ENCODE measurements at regions of chr2 and their contacts with region 1.

Region 1: DNA sequence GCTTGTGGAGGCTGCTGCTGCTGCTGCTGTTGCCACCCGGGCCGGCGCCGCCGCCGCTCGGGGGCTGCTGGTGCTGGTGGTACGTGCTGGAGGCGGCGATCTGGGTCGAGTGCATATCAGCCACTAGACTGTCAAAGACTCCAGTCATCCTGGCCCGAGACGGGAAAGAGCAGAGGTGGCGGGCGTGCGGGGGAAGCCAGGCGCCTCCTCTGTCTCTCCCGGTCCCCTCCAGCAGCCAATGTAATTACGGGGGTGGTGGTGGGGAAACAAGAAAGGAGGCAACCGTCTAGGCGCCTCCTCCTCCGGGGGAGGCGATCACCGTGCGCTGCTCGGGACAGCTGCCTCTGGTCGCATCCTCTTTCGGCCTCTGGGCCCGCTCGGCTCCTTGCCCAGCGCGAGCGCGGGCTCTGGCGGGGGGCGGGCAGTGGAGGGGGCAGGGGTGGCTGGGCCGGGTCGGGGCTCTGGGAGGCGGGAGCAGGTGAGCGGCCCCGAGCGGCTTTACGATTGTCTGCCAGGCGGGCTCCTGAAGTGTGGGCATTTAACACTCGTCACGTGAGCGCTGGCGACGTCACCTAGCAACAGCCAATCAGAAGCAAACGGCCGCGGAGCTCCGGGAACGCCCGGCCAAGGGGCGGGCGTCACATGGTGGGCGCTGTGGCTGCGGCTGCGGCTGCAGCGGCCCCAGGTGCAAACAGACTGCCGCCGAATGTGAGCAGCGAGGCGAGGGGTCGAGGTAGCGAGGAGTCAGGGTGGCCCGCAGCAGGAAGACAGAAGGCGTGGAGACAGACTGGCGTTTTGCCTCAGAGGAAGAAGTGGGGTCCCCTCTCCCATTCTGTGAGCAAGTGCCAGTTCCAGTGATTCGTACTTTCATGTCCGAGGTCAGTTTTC is at the start of gene DLX2:
- DNase-seq: peak; percentile 93
- ATAC-seq: peak; percentile 67
- H3K4me3 ChIP-seq: peak within 1 kb of the TSS; percentile 61 to 75 (median 65)
- H3K27ac ChIP-seq: no peak within 1 kb of the TSS
- H3K4me1 ChIP-seq: peaks cover 62% of the 10 kb centered on the region
- H3K27me3 ChIP-seq: peaks cover 4 to 37% of the 10 kb centered on the region in 2 experiments
- CTCF ChIP-seq: peak; percentile 59
- EP300 ChIP-seq: peak in 1 of 2 experiments; percentile 25; a peak in 1 of 4 replicates
- POLR2A ChIP-seq: peak in 1 of 2 experiments; percentile 72; a peak in 2 of 4 replicates
- RAD21 ChIP-seq: peak; percentile 62
- total RNA-seq, gene DLX2: 0.15 TPM in 1 of 2 replicates, not detected in the other

Region 2: DNA sequence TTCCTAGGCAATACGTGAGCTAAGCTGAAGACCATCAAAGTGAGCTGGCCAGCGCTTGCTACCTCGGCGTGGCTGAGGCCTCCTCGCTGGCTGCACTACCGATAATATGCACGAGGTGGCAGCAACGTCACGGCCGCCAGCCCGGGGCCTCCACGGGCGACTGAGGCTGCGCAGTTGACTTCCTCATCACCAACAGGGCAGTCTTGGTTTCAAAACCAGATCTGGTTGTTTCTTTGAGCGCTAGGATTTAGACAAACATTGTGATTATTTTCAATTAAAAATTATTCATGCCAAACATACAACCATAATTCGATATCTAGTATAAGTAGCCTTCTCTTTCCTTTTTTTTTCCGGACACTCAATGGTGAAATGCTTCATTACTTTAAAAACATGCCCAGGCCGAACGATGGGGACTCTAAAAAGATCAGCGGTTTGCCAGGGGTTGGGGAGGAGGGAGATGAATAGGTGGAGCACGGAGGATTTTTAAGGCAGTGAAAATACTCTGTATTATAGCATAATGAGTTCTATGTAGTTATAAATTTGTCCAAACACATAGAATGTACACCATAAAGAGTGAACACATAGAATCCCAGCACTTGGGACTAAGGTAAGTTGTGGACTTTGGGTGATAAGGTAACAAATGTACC is 528.4 kb before region 1 on chr2:
- CTCF ChIA-PET with region 1: interaction called, 3 read pairs
- POLR2A ChIA-PET with region 1: no interaction called
- in situ Hi-C with region 1: loop called (anchors 5 kb)
- intact Hi-C with region 1: loop called (anchors 2 kb)
- DNase-seq: peak; percentile 66
- ATAC-seq: peak; percentile 99
- H3K4me3 ChIP-seq: peak overlapping the region; percentile 28 to 60 (median 60); a peak in 5 of 6 replicates
- H3K27ac ChIP-seq: no peak overlapping the region
- H3K4me1 ChIP-seq: peaks cover 7% of the 10 kb centered on the region; the same call in 1 of the 2 replicates
- H3K27me3 ChIP-seq: peaks cover 0 to 36% of the 10 kb centered on the region in 2 experiments; a peak in 2 of 5 replicates
- CTCF ChIP-seq: peak; percentile 97
- EP300 ChIP-seq: no peak
- POLR2A ChIP-seq: no peak
- RAD21 ChIP-seq: peak; percentile 95

Region 3: DNA sequence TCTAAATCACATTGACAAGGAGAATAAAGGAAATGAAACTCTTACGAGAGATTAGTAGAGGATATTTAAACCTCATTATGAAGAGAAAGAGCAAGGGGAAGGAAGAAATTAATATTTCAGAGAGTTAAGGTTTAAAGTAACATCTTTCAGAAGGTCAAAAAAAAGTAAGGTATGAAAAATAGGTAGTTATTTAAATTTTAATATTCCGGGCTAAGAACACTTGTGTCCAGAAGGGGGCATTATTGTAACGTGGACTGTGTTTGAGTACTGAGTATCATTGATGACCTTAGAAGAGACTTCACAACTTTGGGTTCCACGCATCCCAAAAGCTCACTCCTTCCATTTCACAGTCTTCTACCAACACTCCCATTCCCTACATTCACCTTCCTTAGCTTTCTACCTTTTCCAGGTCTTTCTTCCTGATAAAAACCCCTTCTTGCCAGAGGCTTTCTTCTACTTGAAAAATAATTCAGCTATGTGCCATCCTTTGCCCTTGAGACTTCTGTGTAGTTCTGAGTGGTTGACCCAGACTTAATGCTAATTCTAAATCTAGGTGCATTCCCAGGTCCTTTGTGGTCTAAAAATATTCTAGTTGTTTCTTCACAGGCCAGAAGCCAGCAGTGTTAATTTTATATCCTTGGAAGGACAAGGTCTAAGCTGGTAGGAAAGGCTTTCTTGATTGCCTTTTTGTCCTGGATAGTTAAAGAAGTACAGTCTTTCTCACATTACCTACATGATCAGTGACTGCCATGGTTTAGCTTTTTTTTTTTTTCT is 398.9 kb before region 1 on chr2:
- CTCF ChIA-PET with region 1: interaction called, 52 read pairs
- POLR2A ChIA-PET with region 1: interaction called, 12 read pairs
- in situ Hi-C with region 1: loop called (anchors 5 kb)
- intact Hi-C with region 1: loop called (anchors 1 kb)
- DNase-seq: peak; percentile 53
- ATAC-seq: peak; percentile 69
- H3K4me3 ChIP-seq: no peak overlapping the region
- H3K27ac ChIP-seq: no peak overlapping the region
- H3K4me1 ChIP-seq: peaks cover 8% of the 10 kb centered on the region; the same call in 1 of the 2 replicates
- H3K27me3 ChIP-seq: no peaks in the 10 kb centered on the region
- CTCF ChIP-seq: peak; percentile 73
- EP300 ChIP-seq: no peak
- POLR2A ChIP-seq: no peak
- RAD21 ChIP-seq: peak; percentile 73

Region 4: DNA sequence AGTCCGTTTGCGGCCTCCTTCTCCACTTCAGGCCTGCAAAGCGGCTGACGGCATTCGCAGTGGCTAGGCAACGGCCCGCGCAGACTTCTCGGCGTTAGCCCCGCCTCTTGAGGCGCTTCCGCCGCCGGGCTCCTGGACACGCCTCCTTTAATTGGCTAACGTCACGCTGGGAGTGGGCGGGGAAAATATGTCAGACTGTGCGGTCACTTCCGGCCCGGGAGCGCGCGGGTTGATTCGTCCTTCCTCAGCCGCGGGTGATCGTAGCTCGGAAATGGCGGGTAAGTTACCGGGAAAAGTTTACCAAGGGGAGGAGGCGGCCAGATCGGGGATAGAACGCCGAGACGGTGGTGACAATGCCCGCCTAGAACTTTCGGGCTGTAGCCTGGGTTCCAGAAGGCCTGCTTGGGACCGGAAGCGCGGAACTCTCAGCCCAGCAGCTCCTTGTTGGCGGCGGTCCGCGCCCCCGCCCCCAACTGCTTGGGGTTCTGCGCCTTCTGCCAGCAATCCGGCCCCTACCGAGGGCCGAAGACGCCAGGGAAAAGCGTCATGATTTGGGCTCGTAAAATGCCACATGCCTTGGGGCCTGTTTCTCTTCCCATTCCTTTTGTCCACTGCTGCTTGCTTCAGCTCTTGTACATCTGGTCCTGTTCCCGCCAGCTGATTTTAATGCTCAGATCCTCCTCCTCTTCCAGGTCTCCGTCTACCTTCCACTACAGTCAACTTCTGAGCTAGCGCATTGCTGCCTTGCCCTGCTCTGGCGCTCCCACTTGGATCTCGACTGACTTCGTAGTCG is 180.2 kb before region 1 on chr2 and contains the start of gene HAT1:
- CTCF ChIA-PET with region 1: no interaction called
- POLR2A ChIA-PET with region 1: interaction called, 10 read pairs
- in situ Hi-C with region 1: no loop called
- intact Hi-C with region 1: no loop called
- DNase-seq: peak; percentile 94
- ATAC-seq: peak; percentile 94
- H3K4me3 ChIP-seq: peak within 1 kb of the TSS; percentile 87 to 95 (median 87)
- H3K27ac ChIP-seq: peak within 1 kb of the TSS; percentile 83
- H3K4me1 ChIP-seq: peaks cover 32% of the 10 kb centered on the region
- H3K27me3 ChIP-seq: peaks cover 0 to 3% of the 10 kb centered on the region in 2 experiments; a peak in 1 of 5 replicates
- CTCF ChIP-seq: no peak
- EP300 ChIP-seq: peak; percentile 3 to 7; a peak in 2 of 4 replicates
- POLR2A ChIP-seq: peak in 1 of 2 experiments; percentile 81; a peak in 3 of 4 replicates
- RAD21 ChIP-seq: 0 out of 2 replicates have a peak, but pooled peaks have one; percentile 40
- total RNA-seq, gene HAT1: 119 and 195 TPM in 2 replicates

Region 5: DNA sequence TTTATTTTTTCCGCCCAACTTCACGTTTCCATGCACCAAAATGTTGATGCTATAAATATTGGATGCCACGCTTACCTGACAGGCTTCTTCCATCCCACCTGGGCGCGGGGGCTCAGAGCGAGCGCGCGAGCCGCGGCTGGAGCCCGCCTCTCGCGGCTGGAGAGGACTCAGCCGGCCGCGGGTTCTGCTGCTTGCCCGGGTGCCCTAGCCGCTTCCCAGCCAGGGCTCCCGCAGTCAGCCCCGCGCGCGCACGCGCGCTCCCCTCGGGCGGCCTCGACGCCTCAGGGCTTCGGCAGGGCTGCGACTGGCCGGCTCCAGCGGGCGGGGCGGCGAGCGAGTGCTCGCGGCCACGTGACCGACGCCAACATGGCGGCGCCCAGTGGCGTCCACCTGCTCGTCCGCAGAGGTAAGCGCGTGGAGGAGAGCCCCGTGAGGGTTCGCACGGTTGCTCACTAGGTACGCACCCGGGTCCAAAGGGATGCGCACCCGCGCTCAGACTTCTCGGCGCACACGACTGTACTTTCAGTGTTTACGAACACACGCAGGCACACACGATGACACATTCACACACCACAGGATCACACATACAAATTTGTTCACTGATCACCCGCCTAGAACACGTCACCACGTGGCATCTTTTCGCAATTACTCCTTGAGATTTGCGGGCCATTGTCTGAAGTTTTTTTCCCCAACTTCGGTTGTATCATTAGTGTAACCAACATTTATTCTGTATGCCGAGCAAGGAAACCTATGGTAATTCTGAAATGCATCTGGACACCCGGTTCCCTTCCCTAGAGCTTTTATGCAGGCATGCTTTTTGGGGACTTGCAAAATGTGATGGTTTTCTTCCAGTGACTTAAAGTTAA is 102.8 kb before region 1 on chr2 and contains the start of gene METAP1D:
- CTCF ChIA-PET with region 1: interaction called, 3 read pairs
- POLR2A ChIA-PET with region 1: interaction called, 6 read pairs
- in situ Hi-C with region 1: loop called (anchors 5 kb)
- intact Hi-C with region 1: loop called (anchors 1 kb)
- DNase-seq: peak; percentile 91
- ATAC-seq: peak; percentile 100
- H3K4me3 ChIP-seq: peak within 1 kb of the TSS; percentile 59 to 80 (median 66)
- H3K27ac ChIP-seq: peak within 1 kb of the TSS; percentile 82
- H3K4me1 ChIP-seq: peaks cover 21% of the 10 kb centered on the region
- H3K27me3 ChIP-seq: no peaks in the 10 kb centered on the region
- CTCF ChIP-seq: peak; percentile 36; the same call in 1 of the 2 replicates
- EP300 ChIP-seq: peak in 1 of 2 experiments; percentile 50; a peak in 1 of 4 replicates
- POLR2A ChIP-seq: peak; percentile 98
- RAD21 ChIP-seq: peak; percentile 89
- total RNA-seq, gene METAP1D: 14.0 and 14.7 TPM in 2 replicates

Region 6: GRCh38 chr2:172084734-172085459 is 17.7 kb before region 1 on chr2:
- CTCF ChIA-PET with region 1: interaction called, 3 read pairs
- POLR2A ChIA-PET with region 1: interaction called, 42 read pairs
- in situ Hi-C with region 1: no loop called
- intact Hi-C with region 1: loop called (anchors 2 kb)
- DNase-seq: peak; percentile 92
- ATAC-seq: peak; percentile 87
- H3K4me3 ChIP-seq: peak overlapping the region; percentile 60 to 82 (median 64)
- H3K27ac ChIP-seq: no peak overlapping the region
- H3K4me1 ChIP-seq: peaks cover 84% of the 10 kb centered on the region
- H3K27me3 ChIP-seq: peaks cover 13 to 83% of the 10 kb centered on the region in 2 experiments; a peak in 4 of 5 replicates
- CTCF ChIP-seq: peak; percentile 35
- EP300 ChIP-seq: 0 out of 4 replicates have a peak, but pooled peaks of 1 of the 2 experiments have one; percentile 27
- POLR2A ChIP-seq: peak in 1 of 2 experiments; percentile 59; a peak in 1 of 4 replicates
- RAD21 ChIP-seq: no peak; the same call in 1 of the 2 replicates